Tibial artery (tissue), 4 donors: ENCODE measurements at regions of chr14 and their contacts with region 1.

Region 1: GRCh38 chr14:101628471-101628966 is 67.2 kb downstream of the DIO3 start:
- DNase-seq: peak; percentile 64 to 81
- H3K4me3 ChIP-seq: peak overlapping the region in 1 of 2 donors; percentile 26
- H3K27ac ChIP-seq: no peak overlapping the region
- H3K4me1 ChIP-seq: peaks cover 0 to 15% (median 7%) of the 10 kb centered on the region in 4 donors
- H3K27me3 ChIP-seq: peaks cover 0 to 5% of the 10 kb centered on the region in 2 donors
- CTCF ChIP-seq: peak; percentile 96 to 97

Region 2: GRCh38 chr14:100383727-100384158 is 1244.8 kb before region 1 on chr14:
- intact Hi-C with region 1: loop called (anchors 5 kb)
- DNase-seq: peak in 1 of 2 donors; percentile 34
- H3K4me3 ChIP-seq: no peak overlapping the region
- H3K27ac ChIP-seq: no peak overlapping the region
- H3K4me1 ChIP-seq: peaks cover 0 to 6% (median 0%) of the 10 kb centered on the region in 4 donors
- H3K27me3 ChIP-seq: no peaks in the 10 kb centered on the region
- CTCF ChIP-seq: peak; percentile 54 to 71

Region 3: GRCh38 chr14:100850841-100851585 is 777.5 kb before region 1 on chr14:
- intact Hi-C with region 1: loop called (anchors 5 kb)
- DNase-seq: peak; percentile 67 to 78
- H3K4me3 ChIP-seq: no peak overlapping the region
- H3K27ac ChIP-seq: no peak overlapping the region
- H3K4me1 ChIP-seq: no peaks in the 10 kb centered on the region
- H3K27me3 ChIP-seq: peaks cover 0 to 3% of the 10 kb centered on the region in 2 donors
- CTCF ChIP-seq: peak; percentile 54